Brain microvascular endothelial cell (primary cell): ENCODE measurements at regions of chr17 and their contacts with region 1.

Region 1: GRCh38 chr17:82361885-82362633 is 3.0 kb downstream of the TEX19 start:
- DNase-seq: no peak
- H3K4me3 ChIP-seq: no peak overlapping the region
- H3K27ac ChIP-seq: no peak overlapping the region
- H3K27me3 ChIP-seq: no peaks in the 10 kb centered on the region
- CTCF ChIP-seq: no peak

Region 2: DNA sequence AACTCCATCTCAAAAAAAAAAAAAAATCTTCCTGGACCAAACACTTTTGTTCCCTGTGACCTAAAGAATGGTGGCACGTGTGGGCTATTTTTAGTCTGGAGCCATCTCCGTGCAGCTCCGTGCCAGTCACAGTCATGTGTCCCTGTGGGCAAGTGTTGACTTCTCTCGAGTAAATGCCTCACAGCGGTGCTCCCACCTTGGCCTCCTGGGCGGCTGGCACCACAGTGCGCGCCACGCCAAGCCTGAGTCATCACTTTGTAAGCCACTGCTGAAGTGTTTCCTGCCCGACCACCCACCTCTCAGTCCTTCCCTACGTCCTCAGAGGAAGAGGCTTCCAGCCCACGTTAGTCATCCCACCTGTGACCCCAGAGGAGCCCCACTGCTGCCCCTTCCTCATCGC is 45.2 kb after region 1 on chr17:
- in situ Hi-C with region 1: loop called (anchors 5 kb)
- DNase-seq: peak; percentile 14
- H3K4me3 ChIP-seq: no peak overlapping the region
- H3K27ac ChIP-seq: no peak overlapping the region
- H3K27me3 ChIP-seq: no peaks in the 10 kb centered on the region
- CTCF ChIP-seq: no peak